ENCODE measurements at regions of chr3 and their contacts with region 1.

Region 1: GRCh38 chr3:52022323-52023100 is 26.8 kb upstream of the RPL29 start:
- DNase-seq: peak in 1 of 2 donors; percentile 85
- H3K4me3 ChIP-seq: peak overlapping the region in 1 of 2 donors; percentile 40
- H3K27ac ChIP-seq: peak overlapping the region; percentile 91 to 96
- H3K4me1 ChIP-seq: peaks cover 34 to 76% of the 10 kb centered on the region in 2 donors
- H3K27me3 ChIP-seq: no peaks in the 10 kb centered on the region
- CTCF ChIP-seq: no peak

Region 2: GRCh38 chr3:52039846-52040245 is 17.3 kb after region 1 on chr3:
- intact Hi-C with region 1: loop called (anchors 1 kb)
- DNase-seq: peak; percentile 48 to 93
- H3K4me3 ChIP-seq: peak overlapping the region in 1 of 2 donors; percentile 10
- H3K27ac ChIP-seq: peak overlapping the region; percentile 55 to 74
- H3K4me1 ChIP-seq: peaks cover 4 to 10% of the 10 kb centered on the region in 2 donors
- H3K27me3 ChIP-seq: no peaks in the 10 kb centered on the region
- CTCF ChIP-seq: no peak

Region 3: GRCh38 chr3:52046186-52046913 is 23.8 kb after region 1 on chr3:
- intact Hi-C with region 1: loop called (anchors 2 kb)
- DNase-seq: peak; percentile 86 to 97
- H3K4me3 ChIP-seq: peak overlapping the region in 1 of 2 donors; percentile 26
- H3K27ac ChIP-seq: peak overlapping the region; percentile 94 to 99
- H3K4me1 ChIP-seq: peaks cover 27 to 43% of the 10 kb centered on the region in 2 donors
- H3K27me3 ChIP-seq: no peaks in the 10 kb centered on the region
- CTCF ChIP-seq: no peak

Measured in ascending aorta (tissue), 2 donors.